ENCODE measurements at regions of chr1 and their contacts with region 1.

Region 1: GRCh38 chr1:172532700-172533509 is at the start of gene SUCO:
- DNase-seq: peak; percentile 100
- ATAC-seq: peak; percentile 87
- H3K4me3 Mint-ChIP-seq: peak within 1 kb of the TSS; percentile 87
- H3K27ac Mint-ChIP-seq: peak within 1 kb of the TSS; percentile 100
- H3K4me1 Mint-ChIP-seq: peaks cover 42% of the 10 kb centered on the region
- H3K27me3 Mint-ChIP-seq: peaks cover 2% of the 10 kb centered on the region
- total RNA-seq, gene SUCO: 22.1 to 23.8 TPM

Region 2: GRCh38 chr1:171741872-171742576 is 790.9 kb before region 1 on chr1 and contains the start of gene VAMP4:
- CTCF ChIA-PET with region 1: interaction called, 3 read pairs
- POLR2A ChIA-PET with region 1: interaction called, 4 read pairs
- intact Hi-C with region 1: loop called (anchors 1 to 2 kb)
- DNase-seq: peak; percentile 94
- ATAC-seq: peak; percentile 88
- H3K4me3 Mint-ChIP-seq: peak within 1 kb of the TSS; percentile 92
- H3K27ac Mint-ChIP-seq: peak within 1 kb of the TSS; percentile 99
- H3K4me1 Mint-ChIP-seq: peaks cover 41% of the 10 kb centered on the region
- H3K27me3 Mint-ChIP-seq: no peaks in the 10 kb centered on the region
- total RNA-seq, gene VAMP4: 9.7 to 11.6 TPM

Region 3: DNA sequence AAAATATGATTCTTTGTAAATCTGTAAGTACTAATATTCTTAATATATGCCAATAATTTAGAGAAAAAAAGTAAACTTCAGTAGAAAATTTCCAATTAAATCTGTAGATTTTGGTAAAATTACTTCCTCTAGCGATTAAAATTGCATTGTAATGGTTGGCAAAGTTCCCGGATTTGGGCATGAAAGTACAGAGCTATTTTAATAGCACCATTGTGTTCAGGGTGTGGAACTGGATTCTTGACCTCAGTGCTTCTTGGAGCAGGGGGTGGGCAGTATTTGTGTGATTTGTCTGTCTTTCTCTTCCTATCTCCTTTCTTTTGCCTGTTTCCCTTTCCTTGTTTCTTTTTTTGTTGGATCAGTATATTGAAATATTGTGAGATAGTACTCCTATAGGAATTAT is 619.5 kb before region 1 on chr1:
- CTCF ChIA-PET with region 1: no interaction called
- POLR2A ChIA-PET with region 1: no interaction called
- intact Hi-C with region 1: no loop called
- DNase-seq: no peak
- ATAC-seq: no peak
- H3K4me3 Mint-ChIP-seq: no peak overlapping the region
- H3K27ac Mint-ChIP-seq: no peak overlapping the region
- H3K4me1 Mint-ChIP-seq: peaks cover 1% of the 10 kb centered on the region
- H3K27me3 Mint-ChIP-seq: no peaks in the 10 kb centered on the region

Region 4: GRCh38 chr1:172211221-172211620 is 321.7 kb before region 1 on chr1:
- CTCF ChIA-PET with region 1: no interaction called
- POLR2A ChIA-PET with region 1: no interaction called
- intact Hi-C with region 1: no loop called
- DNase-seq: no peak
- ATAC-seq: no peak
- H3K4me3 Mint-ChIP-seq: no peak overlapping the region
- H3K27ac Mint-ChIP-seq: no peak overlapping the region
- H3K4me1 Mint-ChIP-seq: peaks cover 7% of the 10 kb centered on the region
- H3K27me3 Mint-ChIP-seq: no peaks in the 10 kb centered on the region

Region 5: DNA sequence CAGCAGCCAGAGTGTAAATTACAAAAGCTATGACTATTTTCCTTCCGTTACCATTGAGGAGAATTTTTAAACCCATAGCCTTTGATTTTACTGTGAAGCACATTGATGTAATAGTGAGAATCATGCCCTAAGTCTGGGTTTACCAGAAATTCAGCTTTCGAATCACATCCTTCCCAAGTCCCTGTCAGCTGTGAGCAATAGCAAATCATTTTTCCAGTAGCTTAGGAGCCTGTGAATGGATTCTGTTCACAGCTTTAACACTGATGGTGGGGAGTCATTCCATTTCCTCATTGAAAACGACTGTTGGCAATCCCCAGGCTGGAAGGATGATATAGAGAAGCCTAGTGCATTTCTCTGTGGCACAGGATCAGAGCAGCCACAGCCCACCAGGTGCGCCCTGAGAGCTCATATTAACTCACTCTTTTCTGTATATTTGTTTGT is 194.6 kb before region 1 on chr1:
- CTCF ChIA-PET with region 1: no interaction called
- POLR2A ChIA-PET with region 1: no interaction called
- intact Hi-C with region 1: loop called in 1 of 2 experiments (anchors 1 kb)
- DNase-seq: peak; percentile 82
- ATAC-seq: peak; percentile 88
- H3K4me3 Mint-ChIP-seq: no peak overlapping the region
- H3K27ac Mint-ChIP-seq: peak overlapping the region; percentile 30
- H3K4me1 Mint-ChIP-seq: peaks cover 48% of the 10 kb centered on the region
- H3K27me3 Mint-ChIP-seq: peaks cover 2% of the 10 kb centered on the region

Region 6: DNA sequence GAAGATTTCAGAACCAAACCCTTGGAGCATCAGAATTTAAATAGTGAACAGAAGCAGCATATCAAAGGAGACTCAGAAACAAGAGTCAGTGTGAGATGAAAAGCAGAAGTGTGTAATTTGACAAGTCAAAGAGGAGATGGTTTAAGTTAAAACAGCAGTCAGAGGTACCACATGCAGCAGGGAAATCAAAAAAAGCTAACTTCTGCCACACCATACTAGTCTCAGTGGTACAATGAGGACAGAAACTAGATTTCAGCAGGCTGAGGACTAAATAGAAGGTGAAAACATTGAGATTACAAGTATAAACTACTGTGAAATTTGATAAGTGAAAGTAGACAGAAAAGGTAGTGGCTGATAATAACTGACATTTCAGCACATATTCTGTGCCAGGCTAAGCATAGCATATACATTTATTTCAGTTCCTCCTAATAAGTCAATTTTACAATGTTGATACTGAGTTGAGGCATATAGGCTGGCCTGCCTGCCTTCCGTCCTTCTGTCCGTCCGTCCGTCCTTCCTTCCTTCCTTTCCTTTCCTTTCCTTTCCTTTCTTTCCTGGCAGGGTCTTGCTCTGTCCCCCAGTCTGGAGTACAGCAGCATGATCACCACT is 12.6 kb after region 1 on chr1:
- CTCF ChIA-PET with region 1: interaction called, 10 read pairs
- POLR2A ChIA-PET with region 1: interaction called, 5 read pairs
- intact Hi-C with region 1: no loop called
- DNase-seq: no peak
- ATAC-seq: no peak
- H3K4me3 Mint-ChIP-seq: no peak overlapping the region
- H3K27ac Mint-ChIP-seq: no peak overlapping the region
- H3K4me1 Mint-ChIP-seq: peaks cover 44% of the 10 kb centered on the region
- H3K27me3 Mint-ChIP-seq: no peaks in the 10 kb centered on the region

Region 7: GRCh38 chr1:172662464-172663109 is 129.7 kb after region 1 on chr1:
- CTCF ChIA-PET with region 1: no interaction called
- POLR2A ChIA-PET with region 1: interaction called, 3 read pairs
- intact Hi-C with region 1: loop called (anchors 2 to 10 kb)
- DNase-seq: peak; percentile 95
- ATAC-seq: peak; percentile 82
- H3K4me3 Mint-ChIP-seq: peak overlapping the region; percentile 78
- H3K27ac Mint-ChIP-seq: peak overlapping the region; percentile 57
- H3K4me1 Mint-ChIP-seq: peaks cover 74% of the 10 kb centered on the region
- H3K27me3 Mint-ChIP-seq: peaks cover 17% of the 10 kb centered on the region

Region 8: GRCh38 chr1:173476664-173477285 is 943.9 kb after region 1 on chr1:
- CTCF ChIA-PET with region 1: no interaction called
- POLR2A ChIA-PET with region 1: interaction called, 3 read pairs
- intact Hi-C with region 1: loop called in 1 of 2 experiments (anchors 1 kb)
- DNase-seq: peak; percentile 92
- ATAC-seq: peak; percentile 85
- H3K4me3 Mint-ChIP-seq: peak overlapping the region; percentile 89
- H3K27ac Mint-ChIP-seq: peak overlapping the region; percentile 91
- H3K4me1 Mint-ChIP-seq: peaks cover 58% of the 10 kb centered on the region
- H3K27me3 Mint-ChIP-seq: no peaks in the 10 kb centered on the region

Region 9: DNA sequence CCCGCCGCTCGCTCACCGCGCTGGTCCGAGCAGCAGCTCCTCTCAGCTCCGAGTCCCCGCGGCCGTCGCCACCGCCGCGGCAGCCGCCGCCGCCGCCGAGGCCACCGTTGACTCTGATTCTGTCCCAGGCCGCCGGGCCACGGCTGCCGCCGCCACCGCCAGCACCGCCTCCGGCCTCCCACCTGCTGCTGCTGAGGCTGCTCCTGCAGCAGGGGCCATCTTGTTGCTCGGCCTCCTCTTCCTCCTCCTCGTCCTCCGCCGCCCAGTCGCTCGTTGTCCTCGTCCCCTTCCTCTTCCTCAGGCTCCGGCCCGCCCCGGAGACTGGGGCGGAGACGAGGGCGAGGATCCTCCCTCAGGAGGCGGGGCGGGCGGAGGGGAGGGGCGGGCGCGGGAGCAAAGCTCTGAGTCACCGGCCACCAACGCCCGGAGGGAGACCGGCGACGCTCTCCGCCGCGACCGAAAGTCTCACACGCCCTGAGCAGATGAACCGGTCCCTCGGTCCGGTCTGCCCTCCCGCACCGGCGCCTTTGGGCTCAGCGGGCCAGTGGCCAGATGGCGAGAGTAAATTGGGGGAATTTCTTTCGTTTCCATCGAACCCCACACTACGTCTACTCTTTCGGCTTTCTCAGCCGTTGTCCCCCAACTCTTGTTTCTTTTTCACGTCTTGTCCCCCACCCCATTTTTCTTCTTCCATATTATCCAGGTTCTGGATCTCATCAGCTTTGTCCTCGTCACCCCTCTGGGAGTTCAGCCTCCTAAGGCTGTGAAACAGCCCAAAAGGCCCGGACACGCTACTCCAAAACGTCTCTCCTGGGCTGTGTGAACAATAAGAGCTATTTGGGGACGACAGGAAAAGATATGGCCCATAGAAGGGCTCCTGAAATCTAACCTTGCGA is 1489.4 kb after region 1 on chr1 and contains the start of gene RC3H1:
- CTCF ChIA-PET with region 1: no interaction called
- POLR2A ChIA-PET with region 1: no interaction called
- intact Hi-C with region 1: loop called in 1 of 2 experiments (anchors 1 kb)
- DNase-seq: peak; percentile 96
- ATAC-seq: peak; percentile 91
- H3K4me3 Mint-ChIP-seq: peak within 1 kb of the TSS; percentile 87
- H3K27ac Mint-ChIP-seq: peak within 1 kb of the TSS; percentile 96
- H3K4me1 Mint-ChIP-seq: peaks cover 31% of the 10 kb centered on the region
- H3K27me3 Mint-ChIP-seq: no peaks in the 10 kb centered on the region
- total RNA-seq, gene RC3H1: 27.3 to 37.0 TPM